ENCODE measurements at regions of chr19 and their contacts with region 1.

Region 1: DNA sequence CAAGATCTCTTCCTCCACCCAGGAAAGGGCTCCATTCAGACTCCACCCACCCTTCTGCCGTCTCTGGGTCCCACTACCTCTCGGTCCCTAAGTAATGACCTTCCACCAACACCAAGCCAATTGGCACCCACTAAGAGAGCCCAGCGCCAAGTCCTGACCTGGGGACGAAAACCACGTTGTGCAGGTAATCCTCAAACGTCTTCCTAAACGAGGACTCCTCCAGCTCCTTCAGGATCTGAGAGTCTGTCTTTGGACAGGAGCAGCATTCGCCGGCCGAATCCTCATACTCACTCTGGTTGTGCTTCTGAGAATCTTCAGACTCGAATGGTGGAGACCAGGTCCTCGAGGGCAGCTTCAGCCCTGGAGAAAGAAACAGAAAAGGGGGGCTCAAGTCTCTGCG is 83.1 kb downstream of the ZNF557 start:
- DNase-seq: no peak
- H3K4me3 Mint-ChIP-seq: no peak overlapping the region
- H3K27ac Mint-ChIP-seq: no peak overlapping the region
- H3K4me1 Mint-ChIP-seq: no peaks in the 10 kb centered on the region
- H3K27me3 Mint-ChIP-seq: peaks cover 8% of the 10 kb centered on the region

Region 2: GRCh38 chr19:7104747-7105447 is 47.7 kb before region 1 on chr19:
- CTCF ChIA-PET with region 1: no interaction called
- DNase-seq: no peak
- H3K4me3 Mint-ChIP-seq: no peak overlapping the region
- H3K27ac Mint-ChIP-seq: no peak overlapping the region
- H3K4me1 Mint-ChIP-seq: peaks cover 18% of the 10 kb centered on the region
- H3K27me3 Mint-ChIP-seq: peaks cover 11% of the 10 kb centered on the region

Region 3: GRCh38 chr19:7126132-7126531 is 26.4 kb before region 1 on chr19:
- CTCF ChIA-PET with region 1: no interaction called
- DNase-seq: no peak
- H3K4me3 Mint-ChIP-seq: no peak overlapping the region
- H3K27ac Mint-ChIP-seq: no peak overlapping the region
- H3K4me1 Mint-ChIP-seq: no peaks in the 10 kb centered on the region
- H3K27me3 Mint-ChIP-seq: no peaks in the 10 kb centered on the region

Region 4: DNA sequence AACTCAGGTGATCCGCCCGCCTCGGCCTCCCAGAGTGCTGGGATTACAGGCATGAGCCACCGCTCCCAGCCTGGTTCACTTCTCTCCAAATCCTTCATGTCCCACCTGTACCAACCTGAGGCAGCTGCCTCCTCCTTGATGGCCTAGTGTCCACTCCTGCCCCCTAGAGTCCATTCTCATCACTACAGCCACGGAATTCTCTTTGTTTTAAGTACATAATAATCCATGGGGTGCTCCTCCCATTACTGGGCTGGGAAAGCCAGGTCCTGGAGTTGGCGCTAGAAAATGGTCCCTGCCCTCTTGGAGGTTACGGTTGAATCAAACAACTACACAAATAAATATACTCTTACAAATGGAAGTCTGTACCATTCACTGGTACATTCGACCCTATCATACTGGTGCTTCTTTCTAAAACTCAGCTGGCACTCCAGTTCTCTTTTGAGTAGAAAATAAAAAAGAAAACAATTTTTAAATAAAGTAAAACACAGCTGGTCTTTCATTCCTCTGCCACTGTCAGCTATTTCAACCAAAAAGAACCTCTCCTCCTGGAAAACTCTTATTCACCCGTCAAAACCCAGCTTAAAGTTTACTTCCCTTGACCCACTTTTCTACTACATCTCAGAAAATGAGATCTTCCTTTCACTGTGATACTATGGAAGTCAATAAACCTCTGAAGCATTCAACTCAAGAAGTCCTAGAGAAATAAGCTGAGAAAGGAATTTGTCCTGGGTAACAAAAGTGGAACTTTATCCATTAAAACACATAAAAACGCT is 173.7 kb after region 1 on chr19:
- CTCF ChIA-PET with region 1: interaction called, 11 read pairs
- DNase-seq: peak; percentile 66
- H3K4me3 Mint-ChIP-seq: no peak overlapping the region
- H3K27ac Mint-ChIP-seq: no peak overlapping the region
- H3K4me1 Mint-ChIP-seq: no peaks in the 10 kb centered on the region
- H3K27me3 Mint-ChIP-seq: peaks cover 10% of the 10 kb centered on the region

Region 5: DNA sequence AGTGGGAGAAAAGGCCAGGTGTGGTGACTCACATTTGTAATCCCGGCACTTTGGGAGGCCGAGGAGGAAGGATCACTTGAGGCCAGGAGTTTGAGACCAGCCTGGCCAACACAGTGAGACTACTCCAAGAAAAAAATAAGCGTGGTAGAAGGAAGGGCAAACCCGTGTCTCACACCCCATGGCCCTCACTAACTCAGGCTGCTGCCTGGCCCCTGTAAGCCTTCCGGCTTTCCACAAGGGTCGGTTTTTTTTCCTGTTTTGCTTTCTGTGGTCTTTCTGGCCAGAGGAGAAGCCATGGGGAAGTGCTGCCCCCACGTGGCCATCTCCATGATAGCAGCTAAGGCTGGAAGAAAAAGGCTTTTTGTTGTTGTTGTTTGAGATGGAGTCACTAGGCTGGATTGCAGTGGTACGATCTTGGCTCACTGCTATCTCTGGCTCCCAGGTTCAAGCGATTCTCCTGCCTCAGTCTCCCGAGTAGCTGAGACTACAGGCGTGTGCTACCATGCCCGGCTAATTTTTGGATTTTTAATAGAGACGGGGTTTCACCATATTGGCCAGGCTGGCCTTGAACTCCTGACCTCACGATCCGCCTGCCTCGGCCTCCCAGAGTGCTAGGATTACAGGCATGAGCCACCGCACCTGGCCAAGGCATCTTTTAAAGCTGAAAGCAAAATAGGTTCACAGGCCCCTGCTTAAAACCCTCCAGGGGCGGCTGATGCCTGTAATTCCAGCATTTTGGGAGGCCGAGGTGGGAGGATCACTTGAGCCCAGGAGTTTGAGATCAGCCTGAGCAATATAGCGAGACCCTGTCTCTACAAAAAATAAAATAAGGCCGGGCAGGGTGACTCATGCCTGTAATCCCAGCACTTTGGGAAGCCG is 188.6 kb after region 1 on chr19:
- CTCF ChIA-PET with region 1: interaction called, 16 read pairs
- DNase-seq: peak; percentile 88
- H3K4me3 Mint-ChIP-seq: no peak overlapping the region
- H3K27ac Mint-ChIP-seq: peak overlapping the region; percentile 59
- H3K4me1 Mint-ChIP-seq: peaks cover 63% of the 10 kb centered on the region
- H3K27me3 Mint-ChIP-seq: peaks cover 26% of the 10 kb centered on the region

Measured in activated naive CD4-positive, alpha-beta T cell treated with anti-CD3 and anti-CD28 coated beads, Interleukin-2, amount 10 ng/mL, durations not matched to agents 7 days and 5 days (primary cell).